Activated CD4-positive, alpha-beta T cell treated with anti-CD3 and anti-CD28 coated beads, Interleukin-2, amount 10 ng/mL, durations not matched to agents 7 days and 5 days (primary cell): ENCODE measurements at regions of chr7 and their contacts with region 1.

Region 1: GRCh38 chr7:99296471-99296870 is 23.8 kb downstream of the MYH16 start:
- DNase-seq: no peak
- H3K4me3 Mint-ChIP-seq: no peak overlapping the region
- H3K27ac Mint-ChIP-seq: no peak overlapping the region
- H3K4me1 Mint-ChIP-seq: no peaks in the 10 kb centered on the region
- H3K27me3 Mint-ChIP-seq: no peaks in the 10 kb centered on the region

Region 2: DNA sequence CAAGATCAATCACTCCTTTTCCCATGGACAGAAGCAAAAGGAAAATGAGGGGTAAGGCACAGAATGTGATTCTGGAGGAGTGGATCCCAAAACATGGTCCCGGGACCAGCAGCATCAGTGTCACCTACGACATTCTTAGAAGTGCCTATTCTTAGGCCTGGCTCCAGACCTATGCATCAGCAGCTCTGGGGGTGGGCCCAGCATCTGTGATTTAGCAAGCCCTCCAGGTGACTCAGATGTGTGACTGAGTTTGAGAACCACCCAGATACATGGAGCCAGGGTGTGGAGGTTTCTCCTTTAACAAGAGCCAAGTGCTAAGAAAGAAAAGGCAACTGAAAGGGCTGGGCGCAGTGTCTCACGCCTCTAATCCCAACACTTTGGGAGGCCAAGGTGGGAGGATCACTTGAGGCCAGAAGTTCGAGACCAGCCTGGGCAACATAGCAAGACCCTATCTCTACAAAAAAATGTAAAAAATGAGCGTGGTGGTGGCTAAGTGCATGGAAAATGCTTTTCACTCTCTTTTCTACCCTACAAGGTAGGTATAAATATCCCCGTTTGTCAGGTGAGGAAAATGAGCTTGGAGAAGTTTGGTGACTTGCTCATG is 12.1 kb after region 1 on chr7:
- CTCF ChIA-PET with region 1: interaction called, 4 read pairs
- POLR2A ChIA-PET with region 1: interaction called, 13 read pairs
- DNase-seq: no peak
- H3K4me3 Mint-ChIP-seq: no peak overlapping the region
- H3K27ac Mint-ChIP-seq: no peak overlapping the region
- H3K4me1 Mint-ChIP-seq: peaks cover 9% of the 10 kb centered on the region
- H3K27me3 Mint-ChIP-seq: no peaks in the 10 kb centered on the region